Heart left ventricle (tissue), 16 donors: ENCODE measurements at regions of chr7 and their contacts with region 1.

Region 1: DNA sequence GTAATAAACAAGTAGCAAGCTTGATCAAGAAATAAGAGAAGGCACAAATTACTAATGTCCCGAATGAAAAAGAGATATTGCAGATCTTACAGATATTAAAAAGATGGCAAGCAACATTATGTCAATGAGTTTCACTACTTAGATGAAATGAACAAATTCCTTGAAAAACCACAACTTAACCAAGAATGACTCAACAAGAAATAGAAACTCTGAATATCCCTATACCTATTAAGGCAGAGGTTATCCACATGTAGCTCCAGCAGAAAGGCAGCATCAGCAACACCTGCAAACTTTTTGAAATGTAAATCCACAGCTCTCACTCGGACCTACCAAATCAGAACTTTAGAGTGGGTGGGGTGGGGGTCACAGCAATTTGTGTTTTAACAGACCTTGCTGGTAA is 33.6 kb downstream of the PDE1C start:
- DNase-seq: no peak
- ATAC-seq: no peak
- H3K4me3 ChIP-seq: no peak overlapping the region
- H3K27ac ChIP-seq: peak overlapping the region in 2 of 12 donors; percentile 3 to 5
- H3K4me1 ChIP-seq: peaks cover 0 to 75% (median 22%) of the 10 kb centered on the region in 12 donors
- H3K27me3 ChIP-seq: no peaks in the 10 kb centered on the region
- CTCF ChIP-seq: no peak
- POLR2A ChIP-seq: no peak

Region 2: DNA sequence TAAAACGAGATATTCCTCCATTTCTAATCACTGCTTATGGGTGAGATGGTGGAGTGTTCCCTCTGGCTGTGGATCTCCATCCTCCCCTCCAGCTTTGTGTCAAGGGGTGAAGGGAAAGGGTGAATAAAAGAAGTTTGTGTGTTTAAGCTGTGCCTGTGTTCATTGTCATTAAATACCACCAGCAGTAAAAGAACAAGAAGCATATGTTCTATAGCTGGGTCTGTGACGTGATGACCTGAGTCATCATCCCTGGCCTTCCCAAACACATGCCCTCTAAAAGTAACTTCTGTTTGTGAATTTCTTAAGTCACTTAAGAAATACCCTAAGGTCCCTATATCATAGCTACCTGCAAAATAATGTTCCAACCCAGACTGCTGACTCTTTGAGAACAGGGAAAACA is 244.7 kb before region 1 on chr7:
- intact Hi-C with region 1: loop called in 1 of 10 experiments (anchors 10 kb)
- DNase-seq: no peak
- ATAC-seq: no peak
- H3K4me3 ChIP-seq: no peak overlapping the region
- H3K27ac ChIP-seq: no peak overlapping the region
- H3K4me1 ChIP-seq: no peaks in the 10 kb centered on the region
- H3K27me3 ChIP-seq: no peaks in the 10 kb centered on the region
- CTCF ChIP-seq: no peak
- POLR2A ChIP-seq: no peak

Region 3: DNA sequence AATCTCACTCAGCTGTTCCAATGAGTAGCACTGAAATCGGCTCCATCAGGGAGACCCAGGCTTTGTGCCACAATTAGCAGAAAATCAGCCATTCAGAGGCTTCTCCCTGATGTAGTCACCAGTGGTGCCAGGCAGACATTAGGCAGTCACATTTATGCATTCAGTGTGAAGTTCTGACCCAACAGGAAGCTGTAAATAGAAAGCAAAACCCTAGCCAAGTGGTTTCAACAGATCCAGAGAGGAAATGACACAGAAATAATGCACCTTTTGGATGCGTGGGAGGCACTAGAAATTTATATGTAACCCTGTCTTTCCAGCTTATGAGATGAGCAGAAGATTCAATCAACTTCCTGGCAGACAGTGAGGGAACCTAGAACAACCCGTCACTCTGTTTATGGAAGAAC is 152.8 kb before region 1 on chr7:
- intact Hi-C with region 1: loop called in 2 of 10 experiments (anchors 5 to 10 kb)
- DNase-seq: peak in 2 of 5 donors; percentile 37
- ATAC-seq: peak; percentile 19 to 69 (median 59)
- H3K4me3 ChIP-seq: no peak overlapping the region
- H3K27ac ChIP-seq: peak overlapping the region; percentile 67 to 87 (median 82)
- H3K4me1 ChIP-seq: peaks cover 12 to 59% (median 27%) of the 10 kb centered on the region in 12 donors
- H3K27me3 ChIP-seq: no peaks in the 10 kb centered on the region
- CTCF ChIP-seq: no peak
- POLR2A ChIP-seq: no peak

Region 4: DNA sequence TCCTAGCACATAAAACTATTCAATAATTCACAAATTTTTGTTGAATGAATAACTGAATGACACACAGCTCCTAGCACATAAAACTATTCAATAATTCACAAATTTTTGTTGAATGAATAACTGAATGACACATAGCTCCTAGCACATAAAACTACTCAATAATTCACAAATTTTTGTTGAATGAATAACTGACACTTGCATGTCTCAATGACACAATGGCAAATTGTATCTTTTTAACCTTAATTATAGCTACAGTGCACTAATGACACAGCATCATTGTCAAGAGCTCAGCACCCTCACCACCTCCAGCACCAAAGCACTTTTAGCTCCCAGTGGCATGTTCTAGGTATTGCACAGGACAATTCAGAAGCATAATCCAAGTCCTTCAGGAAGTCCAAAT is 97.9 kb before region 1 on chr7:
- intact Hi-C with region 1: no loop called
- DNase-seq: no peak
- ATAC-seq: peak in 1 of 4 donors; percentile 45
- H3K4me3 ChIP-seq: no peak overlapping the region
- H3K27ac ChIP-seq: no peak overlapping the region
- H3K4me1 ChIP-seq: peaks cover 0 to 79% (median 23%) of the 10 kb centered on the region in 12 donors
- H3K27me3 ChIP-seq: no peaks in the 10 kb centered on the region
- CTCF ChIP-seq: peak in 5 of 12 donors; percentile 12 to 43 (median 15)
- POLR2A ChIP-seq: no peak

Region 5: GRCh38 chr7:32051128-32051527 is 14.6 kb after region 1 on chr7:
- intact Hi-C with region 1: loop called in 1 of 10 experiments (anchors 2 kb)
- DNase-seq: no peak
- ATAC-seq: no peak
- H3K4me3 ChIP-seq: no peak overlapping the region
- H3K27ac ChIP-seq: no peak overlapping the region
- H3K4me1 ChIP-seq: peaks cover 0 to 77% (median 16%) of the 10 kb centered on the region in 12 donors
- H3K27me3 ChIP-seq: no peaks in the 10 kb centered on the region
- CTCF ChIP-seq: no peak
- POLR2A ChIP-seq: no peak